Psoas muscle (tissue), 8 donors: ENCODE measurements at regions of chr11 and their contacts with region 1.

Region 1: GRCh38 chr11:72831513-72832300 is 17.5 kb downstream of the ATG16L2 start:
- DNase-seq: peak; percentile 84 to 91
- ATAC-seq: peak; percentile 90 to 92 (median 92)
- H3K4me3 ChIP-seq: no peak overlapping the region
- H3K27ac ChIP-seq: peak overlapping the region; percentile 72
- H3K4me1 ChIP-seq: peaks cover 14% of the 10 kb centered on the region
- H3K27me3 ChIP-seq: no peaks in the 10 kb centered on the region
- CTCF ChIP-seq: peak; percentile 90

Region 2: GRCh38 chr11:73236854-73237253 is 405.1 kb after region 1 on chr11:
- intact Hi-C with region 1: loop called in 1 of 2 experiments (anchors 5 kb)
- DNase-seq: peak; percentile 71 to 84
- ATAC-seq: peak; percentile 46 to 60 (median 52)
- H3K4me3 ChIP-seq: no peak overlapping the region
- H3K27ac ChIP-seq: peak overlapping the region; percentile 90
- H3K4me1 ChIP-seq: peaks cover 67% of the 10 kb centered on the region
- H3K27me3 ChIP-seq: no peaks in the 10 kb centered on the region
- CTCF ChIP-seq: peak; percentile 65

Region 3: DNA sequence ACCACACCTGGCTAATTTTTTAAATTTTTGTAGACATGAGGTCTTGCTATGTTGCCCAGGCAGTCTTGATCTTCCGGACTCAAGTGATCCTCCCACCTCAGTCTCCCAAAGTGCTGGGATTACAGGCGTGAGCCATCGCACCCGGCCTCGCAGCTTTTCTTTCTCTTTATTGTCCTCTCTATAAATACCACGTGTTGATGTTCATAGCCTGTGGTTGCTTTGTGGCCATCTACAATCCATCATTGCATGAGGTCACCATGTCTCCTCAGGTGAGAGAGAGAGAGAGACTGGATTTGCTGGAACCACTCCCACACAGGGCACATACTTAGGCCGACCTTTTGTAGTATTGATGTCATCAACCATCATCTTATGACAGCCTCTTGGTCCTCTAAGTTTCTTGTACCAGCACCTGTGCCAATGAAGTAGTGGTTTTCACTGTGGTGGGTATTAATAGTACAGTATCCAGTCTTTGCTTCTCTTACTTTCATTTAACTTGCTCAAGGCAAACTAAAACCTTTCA is 417.5 kb after region 1 on chr11:
- intact Hi-C with region 1: loop called in 1 of 2 experiments (anchors 5 kb)
- DNase-seq: peak in 1 of 2 donors; percentile 33
- ATAC-seq: peak; percentile 73 to 94 (median 90)
- H3K4me3 ChIP-seq: no peak overlapping the region
- H3K27ac ChIP-seq: peak overlapping the region; percentile 71
- H3K4me1 ChIP-seq: peaks cover 6% of the 10 kb centered on the region
- H3K27me3 ChIP-seq: no peaks in the 10 kb centered on the region
- CTCF ChIP-seq: no peak

Region 4: GRCh38 chr11:73288873-73289707 is 457.4 kb after region 1 on chr11:
- intact Hi-C with region 1: loop called in 1 of 2 experiments (anchors 5 kb)
- DNase-seq: peak; percentile 69 to 85
- ATAC-seq: peak; percentile 82 to 91 (median 90)
- H3K4me3 ChIP-seq: peak overlapping the region; percentile 46
- H3K27ac ChIP-seq: peak overlapping the region; percentile 32
- H3K4me1 ChIP-seq: peaks cover 6% of the 10 kb centered on the region
- H3K27me3 ChIP-seq: no peaks in the 10 kb centered on the region
- CTCF ChIP-seq: peak; percentile 95